Gastrocnemius medialis (tissue), 4 donors: ENCODE measurements at regions of chr18 and their contacts with region 1.

Region 1: GRCh38 chr18:61893971-61894750 is 1.4 kb upstream of the RNF152 start:
- DNase-seq: peak; percentile 44 to 61
- ATAC-seq: peak; percentile 79 to 84
- H3K4me3 ChIP-seq: peak overlapping the region; percentile 65 to 85 (median 78)
- H3K27ac ChIP-seq: peak overlapping the region; percentile 66 to 84 (median 75)
- H3K4me1 ChIP-seq: peaks cover 7% of the 10 kb centered on the region in 2 donors
- H3K27me3 ChIP-seq: peaks cover 0 to 4% (median 0%) of the 10 kb centered on the region in 3 donors
- CTCF ChIP-seq: peak in 4 of 5 experiments; percentile 14 to 49 (median 29)
- POLR2A ChIP-seq: peak; percentile 47 to 65

Region 2: GRCh38 chr18:61581578-61582201 is 312.5 kb before region 1 on chr18:
- in situ Hi-C with region 1: loop called in 2 of 4 experiments (anchors 25 kb)
- intact Hi-C with region 1: loop called (anchors 2 kb)
- DNase-seq: peak; percentile 24 to 43
- ATAC-seq: peak; percentile 75 to 83
- H3K4me3 ChIP-seq: peak overlapping the region; percentile 43 to 53 (median 45)
- H3K27ac ChIP-seq: peak overlapping the region; percentile 37 to 69 (median 54)
- H3K4me1 ChIP-seq: peaks cover 8 to 17% of the 10 kb centered on the region in 2 donors
- H3K27me3 ChIP-seq: no peaks in the 10 kb centered on the region
- CTCF ChIP-seq: peak; percentile 70 to 97 (median 88)
- POLR2A ChIP-seq: no peak

Region 3: DNA sequence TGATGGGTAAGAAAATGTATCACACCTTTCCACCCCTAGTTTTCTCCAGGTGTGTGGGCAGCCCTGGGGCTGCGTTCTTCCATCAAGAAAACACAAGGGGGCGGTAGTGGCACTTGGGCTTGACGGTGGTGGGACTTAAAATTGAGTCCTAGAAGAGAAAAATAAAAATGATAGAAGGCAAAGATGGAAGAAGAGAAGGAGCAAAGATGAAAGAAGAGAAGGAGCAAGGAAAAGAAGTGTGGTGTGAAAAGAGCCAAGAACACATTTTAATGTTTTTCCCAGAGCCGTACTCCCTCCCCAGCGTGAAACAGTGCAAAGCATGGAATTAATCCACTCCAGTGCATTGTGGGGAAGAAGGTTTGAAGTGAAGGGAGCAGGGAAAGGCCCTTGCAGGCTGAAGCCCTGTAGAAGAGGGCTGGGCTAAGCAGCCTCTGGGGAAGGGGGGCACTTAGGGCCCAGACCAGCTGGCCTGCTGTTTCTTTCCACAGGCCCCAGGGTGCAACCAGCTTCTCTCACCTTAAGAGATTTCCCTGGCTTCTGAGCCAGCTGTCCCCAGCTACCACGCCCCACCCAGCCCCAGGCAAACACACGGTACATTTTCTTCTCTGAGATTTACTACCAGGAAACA is 258.1 kb before region 1 on chr18:
- in situ Hi-C with region 1: loop called in 1 of 4 experiments (anchors 25 kb)
- intact Hi-C with region 1: loop called (anchors 2 kb)
- DNase-seq: peak in 1 of 2 donors; percentile 13
- ATAC-seq: peak in 1 of 2 donors; percentile 36
- H3K4me3 ChIP-seq: no peak overlapping the region
- H3K27ac ChIP-seq: peak overlapping the region in 2 of 4 donors; percentile 55 to 58
- H3K4me1 ChIP-seq: peaks cover 0 to 5% of the 10 kb centered on the region in 2 donors
- H3K27me3 ChIP-seq: no peaks in the 10 kb centered on the region
- CTCF ChIP-seq: peak; percentile 30 to 73 (median 54)
- POLR2A ChIP-seq: no peak

Region 4: DNA sequence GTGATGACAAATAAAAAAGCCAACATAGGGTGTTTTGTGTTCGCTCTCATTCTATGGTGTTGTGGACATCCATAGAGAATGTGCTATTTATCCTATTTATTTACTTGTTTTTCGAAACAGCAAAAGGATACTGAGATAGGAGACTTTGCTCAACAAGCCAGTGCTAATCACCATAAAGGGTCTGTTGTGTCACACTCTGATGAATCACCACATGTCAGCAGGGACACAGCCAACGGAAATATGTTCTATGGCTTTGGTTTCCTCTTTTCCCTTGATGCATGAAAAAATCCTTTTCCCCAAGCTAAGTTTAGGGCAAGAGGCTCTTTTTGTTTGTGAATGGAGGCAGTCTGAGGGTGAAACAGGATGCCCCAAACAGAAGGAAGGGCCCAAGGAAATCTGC is 155.7 kb before region 1 on chr18:
- in situ Hi-C with region 1: loop called in 1 of 4 experiments (anchors 10 kb)
- intact Hi-C with region 1: loop called (anchors 5 kb)
- DNase-seq: peak in 1 of 2 donors; percentile 29
- ATAC-seq: peak; percentile 60 to 65
- H3K4me3 ChIP-seq: no peak overlapping the region
- H3K27ac ChIP-seq: peak overlapping the region; percentile 60 to 74 (median 66)
- H3K4me1 ChIP-seq: peaks cover 0 to 8% of the 10 kb centered on the region in 2 donors
- H3K27me3 ChIP-seq: no peaks in the 10 kb centered on the region
- CTCF ChIP-seq: no peak
- POLR2A ChIP-seq: no peak

Region 5: DNA sequence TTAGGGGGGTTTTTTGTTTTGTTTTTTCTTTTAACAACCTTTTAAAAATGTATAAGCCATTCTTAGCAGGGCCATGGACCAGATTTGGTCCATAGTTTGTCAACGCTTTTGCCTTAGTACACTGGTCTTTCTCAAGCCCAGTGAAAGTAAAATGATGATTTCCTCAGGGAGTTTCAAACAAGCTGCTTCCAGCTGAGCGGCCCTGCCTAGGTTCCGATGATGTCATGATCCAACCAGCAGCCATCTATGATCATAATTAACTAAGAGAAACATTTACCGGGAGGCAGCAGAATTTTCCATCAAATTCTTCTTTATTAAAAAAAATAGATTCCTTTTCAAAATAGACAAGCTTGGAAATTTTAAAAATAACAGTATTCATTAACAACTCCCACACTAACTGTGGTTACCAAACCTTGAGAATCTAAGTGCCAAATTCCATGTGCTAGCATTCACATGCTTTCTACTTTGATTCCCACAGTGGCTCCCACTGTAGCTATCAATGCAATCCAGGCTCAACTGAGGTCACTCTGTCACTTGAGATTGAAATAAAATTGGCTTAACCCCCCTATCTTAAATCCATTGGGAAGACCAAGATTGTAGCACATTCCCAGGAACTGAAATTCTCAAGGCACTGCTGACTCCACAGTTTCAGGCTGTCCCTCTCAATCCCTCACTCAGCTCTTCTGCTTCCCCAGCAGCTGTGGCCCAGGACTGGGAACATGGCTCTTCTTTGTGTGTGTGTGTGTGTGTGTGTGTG is 150.2 kb before region 1 on chr18:
- in situ Hi-C with region 1: loop called in 1 of 4 experiments (anchors 10 kb)
- intact Hi-C with region 1: loop called (anchors 5 kb)
- DNase-seq: peak in 1 of 2 donors; percentile 36
- ATAC-seq: peak; percentile 55 to 64
- H3K4me3 ChIP-seq: no peak overlapping the region
- H3K27ac ChIP-seq: peak overlapping the region; percentile 72 to 78 (median 74)
- H3K4me1 ChIP-seq: peaks cover 5 to 8% of the 10 kb centered on the region in 2 donors
- H3K27me3 ChIP-seq: no peaks in the 10 kb centered on the region
- CTCF ChIP-seq: no peak
- POLR2A ChIP-seq: no peak

Region 6: GRCh38 chr18:61782545-61782944 is 111.6 kb before region 1 on chr18:
- in situ Hi-C with region 1: no loop called
- intact Hi-C with region 1: no loop called
- DNase-seq: no peak
- ATAC-seq: no peak
- H3K4me3 ChIP-seq: no peak overlapping the region
- H3K27ac ChIP-seq: no peak overlapping the region
- H3K4me1 ChIP-seq: no peaks in the 10 kb centered on the region
- H3K27me3 ChIP-seq: no peaks in the 10 kb centered on the region
- CTCF ChIP-seq: no peak
- POLR2A ChIP-seq: no peak

Region 7: DNA sequence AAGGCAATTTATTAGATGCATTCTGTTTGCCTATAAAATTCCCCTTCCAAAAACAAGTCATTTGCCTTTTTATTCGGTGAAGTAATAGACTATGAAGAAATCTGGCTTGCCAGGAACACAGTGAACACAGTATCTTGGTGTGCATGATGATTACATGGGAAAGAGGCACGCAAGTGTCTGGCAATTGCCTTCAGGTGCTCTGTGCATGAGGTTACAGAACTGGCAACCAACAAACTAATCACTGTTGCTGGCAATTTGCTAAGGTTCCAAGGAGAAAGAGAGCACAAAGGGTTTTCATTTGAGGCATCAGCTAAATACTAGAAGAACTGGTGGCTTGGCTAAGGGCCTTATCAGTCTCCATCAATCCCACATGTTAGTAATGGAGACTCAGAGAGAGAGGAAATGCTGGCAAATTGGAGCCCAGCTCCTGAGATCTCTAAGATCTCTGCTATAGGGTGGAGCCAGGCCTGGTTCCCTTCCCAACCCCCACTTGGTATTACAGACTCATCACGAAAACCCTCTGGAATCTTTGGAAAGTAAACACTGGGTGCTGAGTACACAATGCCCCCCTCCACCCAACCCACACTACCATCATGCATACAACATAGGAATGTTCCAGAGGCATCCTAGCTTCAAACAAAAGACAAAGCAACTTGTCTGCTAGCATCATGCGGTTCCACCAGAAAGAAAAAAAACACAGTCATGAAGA is 11.7 kb before region 1 on chr18:
- in situ Hi-C with region 1: no loop called
- intact Hi-C with region 1: no loop called
- DNase-seq: no peak
- ATAC-seq: no peak
- H3K4me3 ChIP-seq: no peak overlapping the region
- H3K27ac ChIP-seq: no peak overlapping the region
- H3K4me1 ChIP-seq: no peaks in the 10 kb centered on the region
- H3K27me3 ChIP-seq: no peaks in the 10 kb centered on the region
- CTCF ChIP-seq: no peak
- POLR2A ChIP-seq: no peak

Region 8: DNA sequence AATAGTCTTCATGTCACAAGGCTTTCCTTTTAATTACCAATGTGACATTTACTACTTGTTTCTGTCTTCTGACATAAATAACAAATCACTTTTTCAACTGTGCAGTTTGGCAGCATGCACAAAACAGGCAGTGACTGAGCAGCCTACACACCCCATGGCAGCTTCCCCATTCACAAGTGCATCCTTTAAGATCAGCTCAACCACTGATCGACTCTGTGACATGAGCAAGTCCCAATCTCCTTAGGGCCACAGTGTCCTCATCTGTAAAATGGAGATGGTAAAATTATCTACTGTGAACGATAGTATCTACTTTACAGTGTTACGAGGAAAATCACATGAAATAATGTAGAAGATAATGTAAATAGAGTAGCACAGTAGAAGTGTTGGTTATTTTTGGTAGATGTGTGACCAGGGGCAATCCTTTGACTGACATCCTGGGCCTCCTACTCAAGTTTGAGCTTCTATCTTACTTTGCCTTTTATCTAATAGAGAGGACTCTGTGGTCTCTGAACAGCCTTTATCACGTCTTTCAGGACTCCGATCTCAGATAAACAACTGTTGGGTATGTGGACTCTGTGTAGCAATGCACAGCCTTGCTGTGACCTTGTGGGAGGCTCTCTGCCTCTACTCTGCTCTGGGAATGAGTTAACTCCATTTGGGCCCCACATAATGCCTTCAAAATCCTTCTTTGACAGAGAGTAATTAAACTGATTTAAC is 172.1 kb after region 1 on chr18:
- in situ Hi-C with region 1: no loop called
- intact Hi-C with region 1: no loop called
- DNase-seq: no peak
- ATAC-seq: no peak
- H3K4me3 ChIP-seq: no peak overlapping the region
- H3K27ac ChIP-seq: no peak overlapping the region
- H3K4me1 ChIP-seq: no peaks in the 10 kb centered on the region
- H3K27me3 ChIP-seq: no peaks in the 10 kb centered on the region
- CTCF ChIP-seq: no peak
- POLR2A ChIP-seq: no peak